ENCODE measurements at regions of chr3 and their contacts with region 1.

Region 1: GRCh38 chr3:23805633-23806533 is at the start of gene UBE2E1:
- DNase-seq: peak; percentile 87
- H3K4me3 ChIP-seq: peak within 1 kb of the TSS; percentile 77 to 99 (median 94)
- H3K27ac ChIP-seq: peak within 1 kb of the TSS; percentile 92 to 96 (median 94)
- H3K4me1 ChIP-seq: peaks cover 0 to 30% (median 19%) of the 10 kb centered on the region in 4 donors
- H3K27me3 ChIP-seq: no peaks in the 10 kb centered on the region
- CTCF ChIP-seq: no peak
- EP300 ChIP-seq: no peak
- POLR2A ChIP-seq: no peak
- total RNA-seq, gene UBE2E1: 61.4 to 145 (median 104) TPM

Region 2: GRCh38 chr3:23611737-23612295 is 194.1 kb before region 1 on chr3:
- intact Hi-C with region 1: loop called (anchors 5 kb)
- DNase-seq: peak; percentile 90
- H3K4me3 ChIP-seq: peak overlapping the region in 2 of 4 donors; percentile 3 to 22
- H3K27ac ChIP-seq: peak overlapping the region in 3 of 4 donors; percentile 45 to 68 (median 61)
- H3K4me1 ChIP-seq: peaks cover 0 to 31% (median 26%) of the 10 kb centered on the region in 4 donors
- H3K27me3 ChIP-seq: no peaks in the 10 kb centered on the region
- CTCF ChIP-seq: no peak
- EP300 ChIP-seq: peak in 1 of 4 donors; percentile 7
- POLR2A ChIP-seq: no peak

Region 3: GRCh38 chr3:23865595-23866450 is 59.9 kb after region 1 on chr3:
- intact Hi-C with region 1: loop called (anchors 5 kb)
- DNase-seq: no peak
- H3K4me3 ChIP-seq: no peak overlapping the region
- H3K27ac ChIP-seq: peak overlapping the region in 2 of 4 donors; percentile 22 to 24
- H3K4me1 ChIP-seq: peaks cover 0 to 38% (median 30%) of the 10 kb centered on the region in 4 donors
- H3K27me3 ChIP-seq: no peaks in the 10 kb centered on the region
- CTCF ChIP-seq: no peak
- EP300 ChIP-seq: no peak
- POLR2A ChIP-seq: no peak

Region 4: DNA sequence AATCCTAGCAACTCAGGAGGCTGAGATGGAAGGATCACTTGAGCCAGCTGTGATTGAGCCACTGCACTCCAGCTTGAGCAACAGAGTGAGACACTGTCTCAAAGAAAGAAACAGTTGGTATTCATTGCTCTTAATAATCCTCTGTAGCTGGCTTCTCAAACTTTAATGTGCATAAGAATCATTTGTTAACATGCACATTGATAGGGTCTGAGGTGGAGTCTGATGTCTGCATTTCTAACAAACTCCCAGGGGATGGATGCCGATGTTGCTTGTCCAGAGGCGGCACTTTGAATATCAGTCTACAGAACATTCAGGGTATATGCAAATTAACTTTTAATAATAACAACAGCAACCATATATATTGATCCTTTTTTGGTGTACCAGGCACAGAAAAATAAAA is 71.0 kb after region 1 on chr3:
- intact Hi-C with region 1: no loop called
- DNase-seq: no peak
- H3K4me3 ChIP-seq: no peak overlapping the region
- H3K27ac ChIP-seq: no peak overlapping the region
- H3K4me1 ChIP-seq: peaks cover 0 to 50% (median 37%) of the 10 kb centered on the region in 4 donors
- H3K27me3 ChIP-seq: no peaks in the 10 kb centered on the region
- CTCF ChIP-seq: no peak
- EP300 ChIP-seq: no peak
- POLR2A ChIP-seq: no peak

Region 5: GRCh38 chr3:23945903-23946751 is 140.2 kb after region 1 on chr3:
- intact Hi-C with region 1: loop called (anchors 5 kb)
- DNase-seq: peak; percentile 99
- H3K4me3 ChIP-seq: peak overlapping the region; percentile 52 to 94 (median 92)
- H3K27ac ChIP-seq: peak overlapping the region; percentile 93 to 100 (median 99)
- H3K4me1 ChIP-seq: peaks cover 0 to 54% (median 48%) of the 10 kb centered on the region in 4 donors
- H3K27me3 ChIP-seq: no peaks in the 10 kb centered on the region
- CTCF ChIP-seq: no peak
- EP300 ChIP-seq: peak in 1 of 4 donors; percentile 56
- POLR2A ChIP-seq: peak in 1 of 2 donors; percentile 59